ENCODE measurements at regions of chr7 and their contacts with region 1.

Region 1: DNA sequence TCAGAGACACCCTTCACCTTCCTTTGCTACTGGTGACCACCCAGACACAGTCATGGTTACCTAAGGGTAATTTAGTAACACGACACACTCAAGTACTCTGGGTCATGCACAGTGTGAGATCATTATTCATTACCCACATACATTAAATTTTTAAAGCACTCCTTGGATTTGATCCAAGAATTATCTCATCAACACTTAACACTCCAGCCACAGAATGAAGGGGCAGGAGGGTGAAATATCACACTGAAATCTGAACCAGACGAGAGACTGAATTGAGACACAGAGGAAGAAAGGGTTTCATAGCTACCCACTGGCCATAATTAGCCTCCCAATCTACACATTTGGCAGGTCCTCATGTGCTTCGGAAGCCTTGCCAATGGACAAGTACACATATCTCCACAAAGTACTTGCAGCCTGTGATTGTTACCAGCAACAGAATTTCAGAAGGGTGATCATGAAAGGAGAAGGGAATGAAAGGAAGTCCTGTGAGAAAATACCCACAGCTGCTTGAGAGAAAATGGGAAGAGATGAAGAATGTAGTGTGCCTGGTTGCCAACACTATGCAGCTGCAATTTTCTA is 189.3 kb downstream of the POLR1F start:
- H3K4me3 ChIP-seq: no peak overlapping the region
- H3K27ac ChIP-seq: peak overlapping the region; percentile 61
- H3K4me1 ChIP-seq: peaks cover 26% of the 10 kb centered on the region
- CTCF ChIP-seq: no peak

Region 2: DNA sequence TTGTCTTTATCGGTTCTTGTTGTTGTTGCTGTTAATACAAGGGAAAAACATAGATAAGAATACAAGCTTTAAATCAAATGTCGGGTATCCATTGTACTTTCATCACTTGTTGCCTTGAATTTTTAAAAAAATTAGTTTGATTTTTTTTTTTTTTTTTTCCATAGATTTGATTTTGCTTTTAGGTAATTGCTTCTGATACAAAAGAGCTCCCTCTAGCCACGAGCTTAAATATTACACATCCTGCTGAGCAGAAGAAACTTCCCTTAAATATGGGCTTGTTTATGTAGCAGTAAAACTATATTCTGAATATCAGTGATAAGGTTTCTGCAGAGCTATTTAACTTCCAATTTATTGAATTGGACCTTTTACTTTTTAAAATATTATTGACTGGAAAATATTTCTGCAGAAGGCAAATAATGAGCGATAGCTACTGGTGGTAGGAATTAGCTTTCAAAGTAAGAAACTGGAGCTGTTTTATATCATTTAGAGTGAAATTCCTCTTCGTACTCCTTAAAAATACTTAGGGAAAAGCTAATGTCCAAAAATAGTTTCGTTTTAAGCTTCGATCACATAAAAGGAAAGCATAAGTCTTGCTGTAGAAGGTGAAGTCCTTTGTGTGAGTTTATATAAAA is 27.6 kb before region 1 on chr7:
- CTCF ChIA-PET with region 1: interaction called, 10 read pairs
- POLR2A ChIA-PET with region 1: no interaction called
- H3K4me3 ChIP-seq: no peak overlapping the region
- H3K27ac ChIP-seq: no peak overlapping the region
- H3K4me1 ChIP-seq: no peaks in the 10 kb centered on the region
- CTCF ChIP-seq: no peak

Region 3: DNA sequence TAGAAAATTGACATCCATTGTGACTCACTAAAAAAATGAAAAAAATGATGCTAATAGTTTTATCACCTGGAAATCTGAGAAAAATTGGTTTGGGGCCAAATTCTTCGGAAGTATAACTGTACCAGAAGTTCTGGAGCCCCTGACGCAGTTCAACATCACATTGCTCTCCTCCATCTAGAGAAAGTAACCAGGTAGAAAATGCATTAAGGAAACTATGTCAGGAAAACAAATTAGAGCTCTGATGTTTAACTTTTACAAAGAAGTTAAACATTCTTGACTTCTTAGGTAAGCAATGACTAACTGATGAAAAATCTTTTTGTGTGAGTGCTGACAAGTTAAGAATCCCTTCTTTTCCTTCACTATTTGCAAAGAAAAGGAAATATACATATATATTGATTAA is 315.0 kb after region 1 on chr7:
- CTCF ChIA-PET with region 1: no interaction called
- POLR2A ChIA-PET with region 1: no interaction called
- H3K4me3 ChIP-seq: no peak overlapping the region
- H3K27ac ChIP-seq: no peak overlapping the region
- H3K4me1 ChIP-seq: no peaks in the 10 kb centered on the region
- CTCF ChIP-seq: no peak